ENCODE measurements at regions of chr10 and their contacts with region 1.

Region 1: DNA sequence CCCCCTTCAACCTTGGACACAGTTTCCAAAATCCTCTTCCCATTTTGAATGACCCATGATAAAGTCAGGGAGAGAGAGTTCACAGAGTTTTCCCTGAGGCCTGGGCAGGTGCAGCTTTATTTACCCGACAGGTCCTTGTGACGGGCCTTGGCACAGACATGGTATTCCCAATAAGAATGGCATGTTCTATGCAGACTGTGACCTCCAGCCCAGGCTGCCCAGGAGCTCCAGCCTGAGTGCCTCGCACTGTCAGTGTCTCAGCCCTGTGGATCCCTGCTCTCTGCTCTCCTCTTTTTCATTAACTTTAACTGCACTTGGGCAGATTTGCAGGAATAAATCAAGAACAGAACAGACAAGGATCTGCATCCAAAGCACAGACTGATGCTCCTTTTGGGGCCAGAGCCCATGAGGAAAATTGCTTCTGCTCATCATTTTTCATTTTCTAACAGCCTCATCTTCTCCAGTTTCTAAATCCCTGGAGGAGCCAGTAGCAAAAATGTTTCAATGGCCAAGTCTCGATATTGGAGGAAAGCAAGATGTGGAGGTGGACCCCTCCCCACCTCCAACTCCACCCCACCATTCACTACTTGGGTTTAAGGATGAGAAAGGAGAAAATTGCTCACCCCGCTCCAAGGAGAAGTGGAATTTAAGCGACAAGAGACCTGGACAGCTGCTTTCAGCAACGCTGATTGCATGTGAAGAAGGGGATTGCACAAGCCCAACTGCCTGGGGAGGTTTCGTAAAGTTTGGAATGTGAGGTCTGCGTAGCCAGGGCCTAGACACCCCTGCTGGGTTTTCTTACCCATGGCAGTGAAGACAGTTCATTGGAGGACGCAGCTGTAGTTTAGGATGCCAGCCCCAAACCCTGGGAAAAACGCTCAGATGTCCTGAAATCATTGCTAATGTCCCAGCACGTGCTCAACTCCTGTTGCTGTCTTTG is 225.9 kb downstream of the WDR11 start:
- DNase-seq: peak; percentile 62 to 70
- H3K4me3 ChIP-seq: no peak overlapping the region
- H3K27ac ChIP-seq: peak overlapping the region in 1 of 2 donors; percentile 19
- H3K4me1 ChIP-seq: no peaks in the 10 kb centered on the region
- H3K27me3 ChIP-seq: peaks cover 0 to 3% of the 10 kb centered on the region in 2 donors
- CTCF ChIP-seq: no peak
- POLR2A ChIP-seq: no peak

Region 2: DNA sequence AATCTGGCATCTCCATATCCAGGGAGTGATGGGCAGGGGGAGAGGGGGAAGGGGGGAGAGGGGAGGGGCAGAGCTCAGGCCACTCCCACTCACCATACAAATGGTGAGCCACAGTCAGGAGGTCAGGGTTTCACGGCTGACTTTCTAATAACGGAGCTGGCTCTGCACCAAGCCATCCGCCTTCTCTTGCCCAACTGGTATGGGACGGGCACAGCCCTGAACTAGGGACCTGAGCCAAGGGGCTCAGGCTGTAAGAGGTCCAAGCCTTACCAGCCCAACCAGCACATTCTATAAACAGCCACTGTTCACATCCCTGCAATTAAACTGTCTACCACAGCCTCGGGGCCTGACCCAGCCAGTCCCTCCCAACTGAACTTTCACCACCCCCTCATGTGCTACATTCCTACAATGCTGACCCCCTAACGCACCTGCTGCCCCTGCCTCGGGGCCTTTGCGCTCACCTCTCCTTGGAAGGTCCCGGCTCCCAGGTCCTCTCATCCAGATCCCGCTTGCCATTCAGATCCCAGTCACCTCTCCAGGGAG is 1567.1 kb before region 1 on chr10:
- intact Hi-C with region 1: no loop called
- DNase-seq: peak; percentile 73 to 81
- H3K4me3 ChIP-seq: no peak overlapping the region
- H3K27ac ChIP-seq: peak overlapping the region in 1 of 2 donors; percentile 40
- H3K4me1 ChIP-seq: no peaks in the 10 kb centered on the region
- H3K27me3 ChIP-seq: no peaks in the 10 kb centered on the region
- CTCF ChIP-seq: no peak
- POLR2A ChIP-seq: no peak

Region 3: GRCh38 chr10:120184547-120185337 is 892.3 kb before region 1 on chr10:
- intact Hi-C with region 1: loop called (anchors 5 kb)
- DNase-seq: no peak
- H3K4me3 ChIP-seq: no peak overlapping the region
- H3K27ac ChIP-seq: no peak overlapping the region
- H3K4me1 ChIP-seq: no peaks in the 10 kb centered on the region
- H3K27me3 ChIP-seq: no peaks in the 10 kb centered on the region
- CTCF ChIP-seq: no peak
- POLR2A ChIP-seq: no peak

Region 4: DNA sequence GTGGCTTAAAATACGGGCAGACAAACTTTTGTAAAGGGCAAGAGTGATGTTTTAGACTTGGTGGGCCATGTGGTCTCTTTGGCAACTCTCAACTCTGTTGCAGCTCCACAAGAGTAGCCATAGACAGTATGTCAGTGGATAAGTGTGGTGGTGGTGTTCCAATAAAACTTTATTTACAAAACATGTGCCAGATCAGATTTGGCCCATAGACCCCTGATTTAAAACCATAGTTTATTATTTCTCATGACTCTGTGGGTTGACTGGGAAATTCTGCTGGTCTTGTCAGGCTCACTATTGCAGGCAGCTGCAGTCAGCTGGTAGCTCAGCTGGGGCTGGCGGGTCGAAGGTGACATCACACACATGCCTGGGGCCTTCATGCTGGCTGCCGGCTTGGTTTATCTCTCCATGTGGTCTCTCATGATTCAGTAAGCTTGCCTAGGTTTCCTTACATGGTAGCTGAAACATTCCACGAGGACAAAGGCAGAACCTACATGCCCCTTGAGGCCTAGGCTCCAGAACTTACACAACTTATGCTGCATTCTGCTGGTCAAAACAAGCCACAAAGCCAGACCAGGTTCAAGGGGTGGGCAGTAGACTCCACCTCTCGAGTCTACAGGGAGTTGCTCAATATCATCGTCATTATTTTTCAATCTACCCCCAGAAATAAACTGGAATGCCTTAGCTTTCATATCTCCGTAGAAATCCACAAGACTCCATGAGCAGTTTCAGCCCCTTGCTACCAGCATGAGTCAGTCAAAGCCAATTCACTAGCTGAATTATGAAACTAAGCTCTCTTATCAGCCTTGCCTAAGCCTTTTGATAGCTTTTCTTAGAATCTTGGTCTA is 19.8 kb after region 1 on chr10:
- intact Hi-C with region 1: no loop called
- DNase-seq: no peak
- H3K4me3 ChIP-seq: no peak overlapping the region
- H3K27ac ChIP-seq: no peak overlapping the region
- H3K4me1 ChIP-seq: peaks cover 0 to 4% of the 10 kb centered on the region in 2 donors
- H3K27me3 ChIP-seq: no peaks in the 10 kb centered on the region
- CTCF ChIP-seq: no peak
- POLR2A ChIP-seq: no peak